Activated naive CD4-positive, alpha-beta T cell treated with anti-CD3 and anti-CD28 coated beads for 36 hours (primary cell): ENCODE measurements at regions of chr14 and their contacts with region 1.

Region 1: GRCh38 chr14:58637391-58638230 is at the start of gene DACT1:
- DNase-seq: peak; percentile 68
- H3K4me3 Mint-ChIP-seq: peak within 1 kb of the TSS; percentile 91
- H3K27ac Mint-ChIP-seq: peak within 1 kb of the TSS; percentile 90
- H3K4me1 Mint-ChIP-seq: peaks cover 48% of the 10 kb centered on the region
- H3K27me3 Mint-ChIP-seq: peaks cover 5% of the 10 kb centered on the region
- total RNA-seq, gene DACT1: 4.0 to 5.2 TPM

Region 2: GRCh38 chr14:58244556-58245387 is 392.8 kb before region 1 on chr14 and contains the start of gene PSMA3:
- CTCF ChIA-PET with region 1: no interaction called
- intact Hi-C with region 1: loop called (anchors 5 kb)
- DNase-seq: peak; percentile 99
- H3K4me3 Mint-ChIP-seq: peak within 1 kb of the TSS; percentile 98
- H3K27ac Mint-ChIP-seq: peak within 1 kb of the TSS; percentile 99
- H3K4me1 Mint-ChIP-seq: peaks cover 43% of the 10 kb centered on the region
- H3K27me3 Mint-ChIP-seq: no peaks in the 10 kb centered on the region
- total RNA-seq, gene PSMA3: 399 to 424 TPM

Region 3: DNA sequence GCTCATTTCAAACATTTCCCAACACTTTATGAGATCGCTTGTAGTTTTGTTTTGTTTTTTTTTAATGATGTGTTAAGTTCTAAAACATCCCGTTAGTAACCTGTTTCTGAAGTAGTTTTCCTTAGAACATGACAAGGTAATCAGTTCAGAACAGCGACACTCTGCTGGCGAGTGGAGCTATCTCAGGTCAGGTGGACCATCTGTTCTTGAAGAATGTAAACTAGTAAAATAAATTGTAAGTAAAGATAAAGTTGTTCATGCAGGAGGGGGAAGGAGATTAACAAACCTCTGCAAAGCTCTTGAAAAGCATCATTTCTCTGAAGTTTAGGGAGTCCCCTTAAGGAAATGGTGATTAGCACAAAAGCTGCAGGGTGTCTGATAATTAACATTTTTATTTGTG is 71.8 kb before region 1 on chr14:
- CTCF ChIA-PET with region 1: interaction called, 12 read pairs
- intact Hi-C with region 1: no loop called
- DNase-seq: no peak
- H3K4me3 Mint-ChIP-seq: no peak overlapping the region
- H3K27ac Mint-ChIP-seq: no peak overlapping the region
- H3K4me1 Mint-ChIP-seq: peaks cover 21% of the 10 kb centered on the region
- H3K27me3 Mint-ChIP-seq: no peaks in the 10 kb centered on the region

Region 4: DNA sequence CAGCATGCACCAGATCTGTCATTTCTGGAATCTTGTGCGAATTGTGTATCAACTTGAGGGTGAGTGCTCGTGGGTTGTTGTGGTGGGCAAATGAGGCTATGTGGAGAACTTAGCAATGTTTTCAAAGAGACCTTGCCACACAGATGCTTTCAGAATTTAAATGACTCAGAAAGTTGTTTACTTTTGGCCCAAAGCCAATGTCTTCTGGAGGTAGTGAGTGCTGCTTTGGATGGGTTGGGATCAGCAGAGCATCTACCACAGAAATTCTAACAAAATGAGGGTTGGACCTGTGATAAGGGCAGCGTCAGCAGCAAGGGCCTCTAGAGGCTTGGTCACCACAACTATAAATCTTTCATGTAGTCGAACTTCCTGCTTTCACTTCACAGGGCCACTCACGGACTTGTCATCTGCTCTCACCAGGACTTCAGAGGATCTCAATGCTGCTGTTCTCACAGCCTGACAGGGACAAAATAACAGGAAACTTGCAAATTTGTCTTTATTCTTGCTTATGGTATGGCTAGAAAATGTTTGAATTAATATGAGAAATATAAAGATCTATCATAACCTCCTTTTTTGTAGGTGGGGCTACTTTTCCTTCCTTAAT is 111.6 kb after region 1 on chr14:
- CTCF ChIA-PET with region 1: no interaction called
- intact Hi-C with region 1: loop called (anchors 1 kb)
- DNase-seq: peak; percentile 35
- H3K4me3 Mint-ChIP-seq: no peak overlapping the region
- H3K27ac Mint-ChIP-seq: no peak overlapping the region
- H3K4me1 Mint-ChIP-seq: peaks cover 15% of the 10 kb centered on the region
- H3K27me3 Mint-ChIP-seq: no peaks in the 10 kb centered on the region

Region 5: GRCh38 chr14:59055439-59056045 is 417.9 kb after region 1 on chr14:
- CTCF ChIA-PET with region 1: interaction called, 10 read pairs
- intact Hi-C with region 1: loop called (anchors 1 kb)
- DNase-seq: peak; percentile 54
- H3K4me3 Mint-ChIP-seq: no peak overlapping the region
- H3K27ac Mint-ChIP-seq: no peak overlapping the region
- H3K4me1 Mint-ChIP-seq: no peaks in the 10 kb centered on the region
- H3K27me3 Mint-ChIP-seq: peaks cover 4% of the 10 kb centered on the region

Region 6: DNA sequence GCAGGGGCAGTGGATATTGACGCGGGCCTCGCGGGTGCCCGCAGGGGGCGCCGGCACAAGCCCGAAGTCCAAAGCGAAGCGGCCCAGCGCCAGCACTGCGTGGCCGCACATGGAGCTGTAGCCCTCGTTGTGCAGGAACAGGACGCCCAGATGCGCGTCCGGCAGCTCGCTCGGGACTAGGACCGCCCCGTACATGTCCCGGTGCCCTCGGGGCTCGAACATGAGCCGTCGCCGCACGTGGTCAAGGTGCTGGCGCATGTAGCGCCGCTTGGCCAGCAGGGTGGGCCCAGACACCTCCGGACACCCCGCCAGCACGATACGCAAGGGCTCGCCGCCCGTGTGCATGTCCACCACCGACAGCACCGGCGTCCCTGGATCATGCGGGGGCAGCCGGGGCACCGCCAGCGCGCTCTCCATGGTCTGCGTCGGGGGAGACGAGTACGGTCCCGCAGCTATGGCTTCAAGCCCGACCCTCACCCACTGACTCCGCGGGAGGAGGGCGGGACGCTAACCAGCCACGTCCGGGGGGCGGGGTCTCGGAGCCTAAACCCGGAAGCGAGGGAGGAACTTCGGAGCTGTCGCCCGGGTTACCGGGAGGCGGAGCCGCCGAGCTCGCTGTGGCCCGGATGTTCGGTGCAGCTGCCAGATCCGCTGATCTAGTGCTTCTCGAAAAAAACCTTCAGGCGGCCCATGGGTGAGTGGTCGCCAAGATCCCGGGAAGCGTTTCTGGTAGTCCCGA is 846.5 kb after region 1 on chr14 and contains the starts of genes JKAMP and L3HYPDH:
- CTCF ChIA-PET with region 1: no interaction called
- intact Hi-C with region 1: loop called (anchors 10 kb)
- DNase-seq: peak; percentile 98
- H3K4me3 Mint-ChIP-seq: peak within 1 kb of the TSS; percentile 91
- H3K27ac Mint-ChIP-seq: peak within 1 kb of the TSS; percentile 83
- H3K4me1 Mint-ChIP-seq: peaks cover 49% of the 10 kb centered on the region
- H3K27me3 Mint-ChIP-seq: no peaks in the 10 kb centered on the region
- total RNA-seq, gene JKAMP: 15.2 to 15.6 TPM
- total RNA-seq, gene L3HYPDH: 7.0 to 7.6 TPM